Heart right ventricle (tissue), 16 donors: ENCODE measurements at regions of chr11 and their contacts with region 1.

Region 1: DNA sequence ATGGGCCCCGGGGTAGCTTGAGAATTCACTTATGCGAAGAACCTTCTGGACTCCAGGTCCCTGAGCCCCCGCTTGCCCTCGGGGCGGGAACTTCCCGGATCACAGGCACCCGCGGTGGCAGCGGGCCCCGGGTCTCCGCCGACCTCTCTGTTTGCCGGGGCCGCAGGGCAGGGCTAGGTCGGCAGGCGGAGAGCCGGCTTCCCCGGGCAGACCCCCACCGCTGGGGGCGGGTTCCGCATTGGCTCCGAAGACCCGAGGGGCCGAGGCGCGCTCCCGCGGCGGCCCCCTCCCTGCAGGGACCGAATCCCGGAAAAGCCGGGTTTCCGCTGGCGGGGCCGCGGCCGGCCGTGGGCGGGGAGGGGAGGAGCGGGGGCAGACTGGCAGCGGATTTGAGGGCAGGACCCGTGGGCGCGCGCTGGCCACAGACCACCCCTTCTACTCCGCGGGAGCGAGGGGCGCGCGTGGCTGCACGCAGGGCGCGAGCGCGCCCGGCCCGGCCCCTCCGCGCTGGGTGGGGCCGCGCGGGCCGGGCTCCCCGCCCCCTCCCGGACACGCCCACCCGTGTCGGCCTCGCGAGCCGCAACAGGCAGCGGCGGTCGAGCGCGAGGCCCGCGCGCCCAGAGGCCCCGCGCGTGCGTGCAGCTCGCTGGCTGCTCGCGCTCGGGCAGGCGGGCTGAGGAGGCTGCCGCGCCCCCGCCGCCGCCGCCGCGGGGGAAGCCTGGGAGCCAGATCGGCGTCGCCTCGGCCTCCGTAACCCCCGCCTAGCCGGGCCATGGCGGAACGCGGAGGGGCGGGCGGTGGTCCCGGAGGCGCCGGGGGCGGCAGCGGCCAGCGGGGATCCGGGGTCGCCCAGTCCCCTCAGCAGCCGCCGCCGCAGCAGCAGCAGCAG is at the start of gene PACS1:
- DNase-seq: peak; percentile 86 to 87
- ATAC-seq: peak; percentile 65 to 89 (median 81)
- H3K4me3 ChIP-seq: peak within 1 kb of the TSS; percentile 75 to 94 (median 88)
- H3K27ac ChIP-seq: peak within 1 kb of the TSS; percentile 96 to 100 (median 99)
- H3K4me1 ChIP-seq: peaks cover 12 to 60% (median 35%) of the 10 kb centered on the region in 9 donors
- H3K27me3 ChIP-seq: no peaks in the 10 kb centered on the region
- CTCF ChIP-seq: peak in 1 of 9 donors; percentile 11
- total RNA-seq, gene PACS1: 50.0 to 121 (median 81.9) TPM

Region 2: GRCh38 chr11:66051766-66052663 is 17.9 kb before region 1 on chr11 and contains the start of gene SF3B2:
- intact Hi-C with region 1: loop called in 1 of 10 experiments (anchors 2 kb)
- DNase-seq: peak; percentile 96 to 98
- ATAC-seq: peak; percentile 96 to 99 (median 98)
- H3K4me3 ChIP-seq: peak within 1 kb of the TSS; percentile 77 to 100 (median 97)
- H3K27ac ChIP-seq: peak within 1 kb of the TSS; percentile 51 to 97 (median 92)
- H3K4me1 ChIP-seq: peaks cover 7 to 53% (median 31%) of the 10 kb centered on the region in 9 donors
- H3K27me3 ChIP-seq: peaks cover 0 to 25% (median 17%) of the 10 kb centered on the region in 7 donors
- CTCF ChIP-seq: peak in 3 of 9 donors; percentile 10 to 17 (median 13)
- total RNA-seq, gene SF3B2: 62.0 to 89.8 (median 72.7) TPM

Region 3: DNA sequence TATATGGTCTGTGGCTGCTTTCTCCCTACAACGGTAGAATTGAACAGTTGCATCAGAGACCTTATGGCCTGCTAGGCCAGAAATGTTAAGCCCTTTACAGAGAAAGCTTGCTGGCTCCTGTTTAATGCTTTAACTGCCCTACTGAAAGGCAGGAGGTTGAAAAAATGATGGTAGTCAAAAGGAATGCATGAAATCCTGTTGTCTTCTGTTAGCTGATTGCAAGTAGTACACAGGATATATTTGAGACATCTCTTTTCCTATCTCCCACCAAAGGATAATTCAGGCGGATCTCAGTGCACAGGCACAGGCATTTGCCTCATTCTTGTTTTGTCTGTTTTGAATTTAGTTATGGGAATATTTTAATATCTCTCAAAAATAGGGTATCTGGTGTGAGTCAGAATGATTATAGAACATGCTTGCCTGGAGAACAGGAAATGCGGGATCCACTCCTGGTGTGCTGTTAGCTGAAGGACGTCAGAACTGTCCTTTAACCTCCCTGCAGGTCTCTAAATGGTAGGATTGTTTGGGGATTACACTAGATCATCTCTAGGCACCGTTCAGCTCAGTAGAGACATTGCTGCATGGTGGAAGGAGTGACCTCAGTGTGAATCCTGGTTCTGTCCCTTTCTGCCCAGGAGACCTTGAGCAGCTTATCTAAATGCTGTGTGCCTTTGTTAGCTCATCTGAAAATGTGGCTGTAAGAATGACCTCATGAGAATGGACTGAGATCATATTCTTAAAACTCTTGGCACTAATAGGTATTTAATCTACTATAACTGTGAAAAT is 49.6 kb after region 1 on chr11:
- intact Hi-C with region 1: loop called in 3 of 10 experiments (anchors 5 to 10 kb)
- DNase-seq: no peak
- ATAC-seq: peak; percentile 47 to 92 (median 72)
- H3K4me3 ChIP-seq: no peak overlapping the region
- H3K27ac ChIP-seq: peak overlapping the region in 9 of 10 donors; percentile 58 to 84 (median 76)
- H3K4me1 ChIP-seq: peaks cover 0 to 72% (median 44%) of the 10 kb centered on the region in 9 donors
- H3K27me3 ChIP-seq: no peaks in the 10 kb centered on the region
- CTCF ChIP-seq: no peak

Region 4: DNA sequence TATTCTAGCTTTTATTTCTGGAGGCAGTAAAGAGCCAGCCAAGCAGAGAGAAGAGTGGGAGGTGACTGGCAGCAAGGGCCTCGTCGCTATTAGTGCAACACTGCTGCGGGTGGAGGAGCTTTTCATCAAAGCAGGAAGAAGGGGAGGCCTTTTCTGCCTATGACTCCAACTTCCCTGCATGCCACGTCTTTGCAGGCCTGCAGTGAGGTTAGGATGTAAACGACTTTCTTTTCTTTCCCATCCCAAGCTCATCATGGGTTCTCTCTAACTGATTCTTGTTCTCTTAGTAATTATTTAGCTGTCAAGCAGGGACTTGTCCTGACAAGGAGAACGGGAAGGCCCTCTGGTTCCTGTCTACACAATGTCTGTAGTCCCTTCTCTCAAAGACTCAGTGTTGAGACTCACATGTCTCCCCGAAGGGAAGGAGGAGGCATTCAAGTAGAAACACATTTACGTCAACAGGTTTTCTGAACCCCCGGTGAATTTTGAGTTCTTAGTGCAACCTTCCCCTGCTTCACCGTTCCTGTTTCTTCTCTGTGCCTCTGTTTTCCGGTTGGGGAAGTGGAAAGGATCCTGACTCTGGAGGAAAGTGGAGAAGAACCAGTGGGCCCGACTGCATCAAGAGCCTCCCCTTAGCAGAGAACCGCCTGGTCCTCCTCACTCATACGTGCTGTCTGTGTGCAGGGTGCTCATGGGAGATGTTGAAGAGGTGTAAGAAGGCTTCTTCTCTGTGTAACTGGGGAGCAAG is 57.0 kb after region 1 on chr11:
- intact Hi-C with region 1: loop called in 7 of 10 experiments (anchors 5 to 10 kb)
- DNase-seq: peak; percentile 37 to 67
- ATAC-seq: peak; percentile 90 to 94 (median 93)
- H3K4me3 ChIP-seq: peak overlapping the region in 1 of 10 donors; percentile 13
- H3K27ac ChIP-seq: peak overlapping the region; percentile 25 to 86 (median 72)
- H3K4me1 ChIP-seq: peaks cover 3 to 42% (median 30%) of the 10 kb centered on the region in 9 donors
- H3K27me3 ChIP-seq: no peaks in the 10 kb centered on the region
- CTCF ChIP-seq: peak in 3 of 9 donors; percentile 25 to 37 (median 26)

Region 5: DNA sequence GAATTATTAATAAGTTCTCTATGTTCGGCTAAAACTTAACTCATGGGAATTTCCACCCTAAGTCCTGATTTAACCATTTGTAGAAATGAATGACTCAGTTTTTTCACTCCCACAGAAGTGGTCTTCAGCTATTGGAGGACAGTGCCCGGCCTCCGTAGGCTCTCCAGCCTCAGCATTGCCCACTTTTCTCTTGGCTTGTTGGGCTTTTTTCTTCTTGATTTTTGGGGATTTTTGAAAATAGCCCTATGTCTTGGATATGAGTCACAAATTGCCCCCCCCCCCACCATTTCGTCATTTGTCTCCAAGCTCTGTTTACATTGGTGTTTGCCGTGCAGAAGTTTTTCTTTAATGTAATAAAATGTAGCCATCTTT is 66.8 kb after region 1 on chr11:
- intact Hi-C with region 1: loop called in 5 of 10 experiments (anchors 5 to 10 kb)
- DNase-seq: no peak
- ATAC-seq: no peak
- H3K4me3 ChIP-seq: no peak overlapping the region
- H3K27ac ChIP-seq: no peak overlapping the region
- H3K4me1 ChIP-seq: peaks cover 0 to 30% (median 8%) of the 10 kb centered on the region in 9 donors
- H3K27me3 ChIP-seq: no peaks in the 10 kb centered on the region
- CTCF ChIP-seq: no peak

Region 6: GRCh38 chr11:66207876-66208275 is 137.9 kb after region 1 on chr11:
- intact Hi-C with region 1: no loop called
- DNase-seq: no peak
- ATAC-seq: no peak
- H3K4me3 ChIP-seq: no peak overlapping the region
- H3K27ac ChIP-seq: no peak overlapping the region
- H3K4me1 ChIP-seq: peaks cover 0 to 10% (median 0%) of the 10 kb centered on the region in 9 donors
- H3K27me3 ChIP-seq: no peaks in the 10 kb centered on the region
- CTCF ChIP-seq: no peak